AG04449 (cell line): ENCODE measurements at regions of chr5 and their contacts with region 1.

Region 1: DNA sequence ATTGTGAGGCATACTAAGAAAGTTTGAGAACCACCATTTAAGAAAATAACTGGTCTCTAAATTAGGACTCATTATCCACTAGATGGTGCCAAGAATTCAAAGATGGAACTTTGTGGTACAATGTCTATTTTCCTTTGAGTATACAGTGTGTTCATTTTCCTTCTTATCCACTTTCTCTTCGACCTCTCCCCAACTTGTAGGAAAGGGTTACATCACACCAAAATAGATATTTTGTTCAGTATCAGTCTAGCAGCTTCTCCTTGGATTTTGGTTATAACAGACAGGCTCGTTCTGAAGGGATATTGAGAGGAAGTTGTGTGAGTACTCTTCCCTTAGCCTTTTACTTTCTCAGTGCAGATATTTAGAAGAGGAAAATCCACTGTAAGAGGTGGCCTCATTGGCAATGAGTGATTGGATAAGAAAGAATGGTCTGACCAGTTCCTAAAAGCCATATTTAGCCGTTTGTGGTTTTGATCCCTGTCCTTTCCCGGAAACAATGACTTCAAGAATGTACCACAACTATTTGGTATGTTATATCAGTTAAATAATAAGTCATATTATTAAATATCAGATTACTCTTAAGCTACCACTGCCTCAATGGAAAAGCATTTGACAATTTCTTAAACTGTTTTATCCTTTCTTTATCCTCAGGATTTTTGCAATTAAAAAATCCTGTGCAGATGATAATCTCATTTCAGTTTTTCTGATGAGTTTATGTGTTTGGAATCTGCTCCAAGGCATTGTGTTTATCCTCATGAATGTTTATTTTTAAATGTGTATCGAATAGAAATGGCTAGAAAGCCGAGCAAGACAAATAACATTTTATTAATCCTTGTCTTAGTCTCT is 69.0 kb upstream of the GRAMD2B start:
- DNase-seq: peak; percentile 96
- H3K4me3 ChIP-seq: peak overlapping the region; percentile 36
- CTCF ChIP-seq: peak; percentile 27

Region 2: GRCh38 chr5:126106036-126106435 is 248.2 kb before region 1 on chr5:
- CTCF ChIA-PET with region 1: no interaction called
- POLR2A ChIA-PET with region 1: no interaction called
- DNase-seq: no peak
- H3K4me3 ChIP-seq: no peak overlapping the region
- CTCF ChIP-seq: no peak

Region 3: DNA sequence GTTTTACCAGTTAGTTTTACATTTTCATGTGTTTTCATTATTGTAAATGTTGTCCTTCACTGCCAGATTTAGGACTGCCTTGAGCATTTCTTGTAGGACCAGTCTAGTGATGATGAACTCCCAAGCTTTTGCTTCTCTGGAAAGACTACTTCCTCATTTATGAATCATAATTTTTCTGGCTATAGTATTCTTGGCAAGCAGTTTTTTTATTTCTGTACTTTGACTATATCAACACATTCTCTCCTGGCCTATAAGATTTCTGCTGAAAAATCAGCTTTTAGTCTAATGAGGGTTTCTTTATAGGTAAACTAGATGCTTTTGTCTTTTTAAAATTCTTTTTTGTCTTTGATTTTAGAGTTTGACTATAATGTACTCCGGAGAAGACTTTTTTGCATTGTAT is 187.9 kb before region 1 on chr5:
- CTCF ChIA-PET with region 1: no interaction called
- POLR2A ChIA-PET with region 1: no interaction called
- DNase-seq: no peak
- H3K4me3 ChIP-seq: no peak overlapping the region
- CTCF ChIP-seq: no peak

Region 4: DNA sequence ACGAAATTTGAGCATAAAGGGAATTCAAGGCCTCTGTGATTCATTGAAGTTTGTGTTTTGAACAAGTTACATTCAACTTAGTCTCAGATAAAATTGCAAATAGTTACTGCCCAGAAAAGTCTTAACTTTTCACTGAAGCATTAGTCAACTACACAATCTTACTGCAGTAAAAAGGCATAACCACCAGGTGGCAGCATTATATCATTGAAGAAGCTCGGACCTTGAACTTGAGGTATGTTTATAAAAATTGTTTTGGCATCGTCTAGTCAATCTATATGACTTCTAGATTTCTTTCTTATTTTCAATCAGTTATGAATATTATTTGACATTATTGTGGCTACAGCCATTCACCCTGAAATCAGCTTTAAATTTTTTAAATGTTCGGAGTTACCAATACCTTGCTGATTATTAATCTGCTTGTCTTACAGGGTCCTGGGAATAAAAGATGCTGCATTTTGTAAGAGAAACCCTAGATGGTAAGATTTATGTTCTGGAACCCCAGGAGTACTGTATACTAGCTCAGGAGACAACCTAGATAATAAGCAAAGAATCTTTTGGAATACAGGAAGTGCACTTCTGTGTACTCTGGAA is 14.9 kb before region 1 on chr5:
- CTCF ChIA-PET with region 1: interaction called, 83 read pairs
- POLR2A ChIA-PET with region 1: no interaction called
- DNase-seq: peak; percentile 41
- H3K4me3 ChIP-seq: no peak overlapping the region
- CTCF ChIP-seq: peak; percentile 46

Region 5: GRCh38 chr5:126402621-126403555 is 48.7 kb after region 1 on chr5:
- CTCF ChIA-PET with region 1: no interaction called
- POLR2A ChIA-PET with region 1: no interaction called
- DNase-seq: no peak
- H3K4me3 ChIP-seq: no peak overlapping the region
- CTCF ChIP-seq: no peak

Region 6: DNA sequence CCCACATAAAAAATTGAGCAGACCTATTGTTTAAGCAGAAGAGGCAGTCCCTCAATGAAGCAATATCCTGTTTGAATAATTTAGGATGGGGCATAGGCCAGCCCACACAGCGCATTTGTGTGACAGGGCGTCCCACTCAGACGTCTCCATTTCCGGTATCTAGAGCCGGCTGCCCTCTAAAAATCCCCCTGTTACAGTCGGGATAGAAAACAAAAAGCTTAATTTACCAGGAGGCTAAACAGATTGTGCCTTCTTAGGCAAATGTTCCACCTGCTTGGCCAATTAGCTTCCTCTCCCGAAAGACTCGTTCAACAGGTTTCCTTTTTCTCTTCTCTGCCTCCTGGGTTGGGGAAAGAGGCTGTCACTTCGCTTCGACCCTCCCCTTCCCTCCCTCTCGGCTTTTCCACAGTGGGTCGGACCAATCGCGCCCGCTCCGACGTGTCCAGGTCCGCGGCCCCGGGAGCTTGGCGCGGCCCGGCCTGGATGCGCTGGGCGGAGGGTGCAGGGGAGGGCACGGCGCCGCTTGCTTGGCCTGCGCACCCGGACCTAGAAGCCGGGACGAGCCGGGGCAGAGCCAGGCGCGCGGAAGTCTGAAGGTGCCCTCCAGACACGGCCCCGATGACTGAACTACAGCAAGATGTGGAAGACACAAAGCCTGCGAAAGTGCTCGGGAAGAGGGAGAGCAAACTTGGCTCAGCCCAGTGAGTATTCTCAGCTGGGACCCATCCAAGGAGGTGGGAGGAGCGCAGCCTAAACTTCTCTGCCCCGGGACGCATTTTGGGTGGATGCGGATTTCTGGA is 69.0 kb after region 1 on chr5 and contains the start of gene GRAMD2B:
- CTCF ChIA-PET with region 1: interaction called, 15 read pairs
- POLR2A ChIA-PET with region 1: no interaction called
- DNase-seq: peak; percentile 46
- H3K4me3 ChIP-seq: peak within 1 kb of the TSS; percentile 75
- CTCF ChIP-seq: no peak

Region 7: GRCh38 chr5:126471875-126472537 is 117.8 kb after region 1 on chr5:
- CTCF ChIA-PET with region 1: interaction called, 10 read pairs
- POLR2A ChIA-PET with region 1: interaction called, 3 read pairs
- DNase-seq: peak; percentile 45
- H3K4me3 ChIP-seq: no peak overlapping the region
- CTCF ChIP-seq: no peak

Region 8: GRCh38 chr5:126499853-126500342 is 145.7 kb after region 1 on chr5:
- CTCF ChIA-PET with region 1: interaction called, 30 read pairs
- POLR2A ChIA-PET with region 1: no interaction called
- DNase-seq: no peak
- H3K4me3 ChIP-seq: no peak overlapping the region
- CTCF ChIP-seq: peak; percentile 32

Region 9: DNA sequence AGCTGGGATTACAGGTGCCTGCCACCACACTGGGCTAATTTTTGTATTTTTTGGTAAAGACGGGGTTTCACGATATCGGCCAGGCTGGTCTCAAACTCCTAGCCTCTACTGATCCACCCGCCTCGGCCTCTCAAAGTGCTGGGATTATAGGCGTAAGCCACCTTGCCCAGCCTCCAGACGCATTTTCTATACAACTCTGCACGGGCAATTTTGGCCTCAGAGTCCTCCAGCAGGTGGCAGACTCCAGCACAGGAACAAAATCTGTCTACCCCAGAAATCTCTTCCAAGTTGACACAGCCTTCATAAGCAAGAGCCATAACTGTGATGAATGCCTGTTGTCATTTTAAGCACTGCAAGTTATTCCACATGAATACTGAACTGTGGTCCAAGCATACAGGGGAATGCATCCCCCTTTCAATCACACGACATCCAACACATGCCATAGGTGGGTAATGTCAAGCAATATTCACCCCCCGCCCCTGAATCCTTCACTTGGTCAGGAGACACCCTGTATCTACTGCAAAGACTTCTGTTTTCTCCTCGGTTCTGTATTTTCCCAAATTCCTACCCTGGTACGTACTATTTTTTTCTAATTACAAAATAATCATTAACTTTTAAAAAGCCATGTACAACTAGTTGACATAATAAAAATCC is 190.0 kb after region 1 on chr5:
- CTCF ChIA-PET with region 1: interaction called, 333 read pairs
- POLR2A ChIA-PET with region 1: interaction called, 5 read pairs
- DNase-seq: no peak
- H3K4me3 ChIP-seq: no peak overlapping the region
- CTCF ChIP-seq: peak; percentile 45

Region 10: DNA sequence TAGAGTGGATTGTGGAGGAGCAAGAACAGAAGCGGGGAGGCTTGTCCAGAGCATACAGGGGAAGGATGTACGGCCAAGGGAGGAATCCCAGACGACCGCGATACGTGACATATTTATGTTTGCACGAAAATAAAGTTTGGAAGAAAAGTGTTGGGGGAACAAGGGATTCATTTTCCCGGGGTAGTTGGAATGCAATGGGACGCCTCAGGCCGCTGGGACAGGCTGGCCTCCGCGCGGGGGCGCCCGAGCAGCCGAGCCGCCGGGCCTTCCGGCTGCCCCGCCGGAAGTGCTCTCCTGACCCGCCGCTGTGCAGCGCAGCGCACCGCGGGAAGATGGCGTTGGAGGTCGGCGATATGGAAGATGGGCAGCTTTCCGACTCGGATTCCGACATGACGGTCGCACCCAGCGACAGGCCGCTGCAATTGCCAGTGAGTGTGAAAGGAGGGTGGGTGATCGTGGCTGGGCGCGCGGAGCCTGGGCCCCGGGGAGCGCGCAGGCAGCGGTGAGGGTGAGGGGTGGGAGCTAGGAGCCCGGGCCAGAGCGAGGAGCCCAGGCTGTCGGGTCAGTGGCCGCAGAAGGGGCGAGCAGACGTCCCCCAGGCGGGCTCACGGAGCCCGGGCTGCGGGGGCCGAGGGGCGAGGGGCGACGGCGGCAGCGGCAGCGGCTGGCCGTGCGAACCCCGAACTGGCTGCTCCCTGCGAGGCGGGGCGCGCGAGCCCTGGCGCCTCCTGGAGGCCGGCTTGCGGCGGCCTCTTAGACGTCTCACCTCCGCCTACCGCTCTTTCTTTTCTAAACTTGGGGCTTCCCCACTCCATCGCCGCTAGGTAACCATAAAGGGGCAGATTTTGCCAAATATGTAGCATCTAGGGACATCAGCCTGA is 246.6 kb after region 1 on chr5 and contains the start of gene PHAX:
- CTCF ChIA-PET with region 1: interaction called, 30 read pairs
- POLR2A ChIA-PET with region 1: no interaction called
- DNase-seq: no peak
- H3K4me3 ChIP-seq: peak within 1 kb of the TSS; percentile 96
- CTCF ChIP-seq: peak; percentile 76